PC-9 (cell line): ENCODE measurements at regions of chr12 and their contacts with region 1.

Region 1: DNA sequence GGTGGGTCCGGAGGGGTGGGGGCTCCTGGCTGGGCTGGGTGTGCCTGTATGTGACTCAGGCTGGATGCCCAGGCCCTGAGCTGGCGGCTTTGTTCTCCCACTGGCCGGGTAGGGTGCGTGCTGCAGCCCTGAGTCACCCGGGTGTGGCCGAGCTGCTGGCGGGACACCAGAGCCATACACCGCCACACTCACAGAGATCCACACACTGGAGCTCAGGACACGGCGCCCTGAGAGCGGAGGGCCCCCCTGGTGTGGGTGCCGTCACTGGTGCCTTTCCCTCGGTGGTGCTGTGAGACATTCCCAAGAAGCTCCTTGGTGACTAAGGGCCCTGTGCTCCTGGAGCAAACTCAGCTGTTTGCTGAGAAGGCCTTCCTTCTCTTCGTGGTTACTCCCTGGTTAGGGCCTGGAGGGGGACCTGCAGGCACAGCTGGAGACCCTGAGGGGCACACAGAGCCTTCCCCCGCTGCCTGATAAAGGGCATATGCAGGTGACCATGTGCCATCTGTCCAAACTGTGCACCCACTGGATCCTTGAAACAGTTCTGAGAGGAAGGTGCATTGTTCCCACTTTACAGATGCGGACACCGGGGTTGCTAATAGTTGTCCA is 44.3 kb downstream of the KRT80 start:
- DNase-seq: peak; percentile 96 to 99
- H3K4me3 ChIP-seq: peak overlapping the region; percentile 99; the same call in 1 of the 2 replicates
- H3K27ac ChIP-seq: peak overlapping the region; percentile 100
- H3K4me1 ChIP-seq: peaks cover 70% of the 10 kb centered on the region
- H3K27me3 ChIP-seq: no peaks in the 10 kb centered on the region
- CTCF ChIP-seq: no peak

Region 2: DNA sequence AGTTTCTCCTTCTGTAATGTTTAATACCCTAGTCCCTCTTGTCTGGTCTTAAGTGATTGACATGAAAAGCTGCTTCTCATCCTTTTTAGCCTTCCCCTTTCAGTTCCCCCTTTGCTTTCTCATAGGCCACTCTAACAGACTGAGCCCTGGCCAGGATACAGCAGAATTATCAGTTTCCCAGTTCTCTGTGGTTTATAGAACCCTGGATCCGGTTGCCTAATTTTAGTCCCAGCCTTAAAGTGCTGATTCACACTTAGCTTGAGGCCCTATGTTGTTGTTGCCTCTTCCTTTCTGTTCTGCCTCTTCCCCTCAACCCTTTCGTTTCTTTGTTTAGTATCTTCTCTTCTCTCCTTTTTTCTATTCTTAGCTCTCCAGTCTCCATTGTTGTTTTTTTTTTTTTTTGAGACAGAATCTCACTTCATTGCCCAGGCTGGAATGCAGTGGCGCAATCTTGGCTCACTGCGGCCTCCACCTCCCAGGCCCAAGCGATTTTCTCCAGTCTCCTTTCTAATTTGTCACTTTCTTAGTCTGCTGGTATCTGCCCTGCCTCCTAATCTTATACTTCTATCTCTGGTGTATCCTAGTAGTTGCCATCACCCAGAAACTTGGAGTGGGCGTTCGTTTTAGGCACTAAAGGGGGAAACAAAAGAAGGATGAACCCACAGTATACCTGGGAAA is 820.6 kb before region 1 on chr12:
- CTCF ChIA-PET with region 1: no interaction called
- POLR2A ChIA-PET with region 1: no interaction called
- intact Hi-C with region 1: no loop called
- DNase-seq: peak; percentile 53
- H3K4me3 ChIP-seq: no peak overlapping the region
- H3K27ac ChIP-seq: peak overlapping the region; percentile 72
- H3K4me1 ChIP-seq: peaks cover 53% of the 10 kb centered on the region
- H3K27me3 ChIP-seq: no peaks in the 10 kb centered on the region
- CTCF ChIP-seq: no peak

Region 3: DNA sequence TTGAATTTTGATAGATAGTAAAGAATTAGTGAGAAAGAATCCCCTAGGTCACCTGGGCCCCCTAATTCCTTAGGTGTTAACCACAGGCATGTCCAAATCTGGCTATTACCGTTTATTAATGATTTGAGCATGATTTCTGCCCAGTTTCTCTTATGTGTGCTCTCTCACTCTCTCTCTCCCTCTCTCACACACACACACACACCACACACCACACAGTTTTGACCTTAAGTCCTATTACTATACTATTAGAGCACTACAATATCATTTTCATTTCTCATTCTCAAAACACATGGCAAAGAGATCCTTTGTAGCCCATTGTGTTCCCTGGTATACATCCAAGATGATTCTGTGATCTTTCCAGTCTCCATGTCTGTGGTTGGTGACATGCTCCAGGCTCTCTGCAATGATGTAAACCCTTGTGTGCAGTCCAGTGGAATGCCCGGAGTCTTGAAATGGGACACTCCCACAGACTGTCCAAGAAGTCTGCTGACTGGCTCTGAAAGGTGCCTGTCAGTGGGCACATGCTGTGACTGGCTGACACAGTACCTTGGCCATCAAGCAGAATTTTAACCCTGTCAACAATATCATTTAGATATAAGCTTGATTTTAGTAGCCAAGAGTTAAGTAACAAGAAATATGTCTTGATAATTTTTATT is 395.1 kb before region 1 on chr12:
- CTCF ChIA-PET with region 1: no interaction called
- POLR2A ChIA-PET with region 1: no interaction called
- intact Hi-C with region 1: no loop called
- DNase-seq: no peak
- H3K4me3 ChIP-seq: no peak overlapping the region
- H3K27ac ChIP-seq: no peak overlapping the region
- H3K4me1 ChIP-seq: no peaks in the 10 kb centered on the region
- H3K27me3 ChIP-seq: peaks cover 40% of the 10 kb centered on the region; the same call in 1 of the 2 replicates
- CTCF ChIP-seq: no peak

Region 4: DNA sequence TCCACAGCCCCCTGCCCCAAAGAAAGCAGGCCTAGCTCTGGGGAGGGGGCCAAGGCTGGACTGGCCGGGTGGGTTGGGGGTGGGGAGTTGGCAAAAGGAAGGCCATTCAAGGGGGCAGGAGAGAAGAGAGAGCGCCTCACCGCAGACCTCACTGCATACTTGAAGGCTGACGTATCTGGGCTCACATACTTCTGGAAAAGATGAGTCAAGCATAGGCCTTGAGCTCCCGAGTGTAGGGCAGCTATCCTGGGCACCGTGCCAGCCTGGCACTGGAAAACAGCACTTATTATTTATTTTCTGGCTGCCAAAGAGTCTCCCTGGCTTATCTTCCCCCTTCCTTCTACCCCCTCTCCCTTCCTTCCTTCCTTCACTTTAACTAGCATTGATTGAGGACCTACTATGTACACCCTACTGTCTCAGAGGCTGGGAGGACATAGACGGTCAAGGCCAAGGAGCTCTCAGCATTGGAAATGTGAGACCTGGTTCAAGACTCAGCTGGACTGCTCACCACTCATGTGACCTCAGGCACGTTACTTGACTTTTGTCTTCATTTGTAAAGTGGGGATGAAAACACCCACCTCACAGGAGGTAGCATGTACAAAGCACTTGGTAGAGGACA is 44.8 kb after region 1 on chr12:
- CTCF ChIA-PET with region 1: no interaction called
- POLR2A ChIA-PET with region 1: interaction called, 13 read pairs
- intact Hi-C with region 1: loop called (anchors 1 kb)
- DNase-seq: peak; percentile 90 to 98
- H3K4me3 ChIP-seq: peak overlapping the region; percentile 92
- H3K27ac ChIP-seq: peak overlapping the region; percentile 77
- H3K4me1 ChIP-seq: peaks cover 75% of the 10 kb centered on the region
- H3K27me3 ChIP-seq: no peaks in the 10 kb centered on the region
- CTCF ChIP-seq: no peak

Region 5: GRCh38 chr12:52230327-52231291 is 83.1 kb after region 1 on chr12:
- CTCF ChIA-PET with region 1: interaction called, 7 read pairs
- POLR2A ChIA-PET with region 1: interaction called, 29 read pairs
- intact Hi-C with region 1: loop called (anchors 1 kb)
- DNase-seq: peak; percentile 85 to 97
- H3K4me3 ChIP-seq: peak overlapping the region; percentile 96
- H3K27ac ChIP-seq: peak overlapping the region; percentile 97
- H3K4me1 ChIP-seq: peaks cover 65% of the 10 kb centered on the region
- H3K27me3 ChIP-seq: no peaks in the 10 kb centered on the region
- CTCF ChIP-seq: no peak

Region 6: GRCh38 chr12:52442600-52443061 is 295.2 kb after region 1 on chr12:
- CTCF ChIA-PET with region 1: no interaction called
- POLR2A ChIA-PET with region 1: interaction called, 7 read pairs
- intact Hi-C with region 1: loop called (anchors 5 kb)
- DNase-seq: peak; percentile 82 to 92
- H3K4me3 ChIP-seq: peak overlapping the region; percentile 17; the same call in 1 of the 2 replicates
- H3K27ac ChIP-seq: peak overlapping the region; percentile 97
- H3K4me1 ChIP-seq: peaks cover 74% of the 10 kb centered on the region
- H3K27me3 ChIP-seq: no peaks in the 10 kb centered on the region
- CTCF ChIP-seq: no peak; the same call in 1 of the 2 replicates

Region 7: GRCh38 chr12:52870351-52871290 is 723.2 kb after region 1 on chr12:
- CTCF ChIA-PET with region 1: interaction called, 3 read pairs
- POLR2A ChIA-PET with region 1: interaction called, 10 read pairs
- intact Hi-C with region 1: loop called (anchors 1 kb)
- DNase-seq: peak; percentile 44 to 75
- H3K4me3 ChIP-seq: peak overlapping the region; percentile 23; the same call in 1 of the 2 replicates
- H3K27ac ChIP-seq: peak overlapping the region; percentile 100
- H3K4me1 ChIP-seq: peaks cover 51% of the 10 kb centered on the region
- H3K27me3 ChIP-seq: no peaks in the 10 kb centered on the region
- CTCF ChIP-seq: peak; percentile 94

Region 8: GRCh38 chr12:52949413-52950331 is 802.2 kb after region 1 on chr12:
- CTCF ChIA-PET with region 1: no interaction called
- POLR2A ChIA-PET with region 1: interaction called, 18 read pairs
- intact Hi-C with region 1: no loop called
- DNase-seq: peak; percentile 61 to 78
- H3K4me3 ChIP-seq: peak overlapping the region; percentile 94
- H3K27ac ChIP-seq: peak overlapping the region; percentile 95
- H3K4me1 ChIP-seq: peaks cover 41% of the 10 kb centered on the region
- H3K27me3 ChIP-seq: no peaks in the 10 kb centered on the region
- CTCF ChIP-seq: no peak

Region 9: GRCh38 chr12:53500776-53501614 is 1353.5 kb after region 1 on chr12 and contains the start of gene TARBP2:
- CTCF ChIA-PET with region 1: no interaction called
- POLR2A ChIA-PET with region 1: interaction called, 18 read pairs
- intact Hi-C with region 1: no loop called
- DNase-seq: peak; percentile 98
- H3K4me3 ChIP-seq: peak within 1 kb of the TSS; percentile 77
- H3K27ac ChIP-seq: peak within 1 kb of the TSS; percentile 81
- H3K4me1 ChIP-seq: peaks cover 17% of the 10 kb centered on the region
- H3K27me3 ChIP-seq: no peaks in the 10 kb centered on the region
- CTCF ChIP-seq: no peak
- total RNA-seq, gene TARBP2: 47.8 and 53.3 TPM in 2 replicates